HEK293 (cell line): ENCODE measurements at regions of chr2 and their contacts with region 1.

Region 1: DNA sequence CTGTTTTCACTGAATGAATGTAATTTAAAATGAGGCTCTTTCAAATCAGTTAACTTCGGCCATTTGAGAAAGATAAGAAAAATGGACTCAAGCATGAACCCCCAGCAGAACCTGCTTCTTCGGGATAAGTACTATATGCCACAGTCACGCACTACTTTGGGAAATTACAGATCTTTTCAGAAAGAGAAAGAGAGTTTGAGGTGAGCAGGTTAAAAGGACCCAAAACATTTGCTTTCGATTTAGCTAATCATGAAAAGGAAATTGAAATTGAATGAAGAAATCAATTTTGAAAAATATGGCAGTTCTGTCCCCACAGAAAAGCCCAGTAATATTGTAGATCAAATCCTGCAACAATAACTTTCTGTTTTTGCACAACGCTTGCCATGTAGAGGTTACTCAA is 156.9 kb downstream of the GRB14 start:
- H3K4me3 ChIP-seq: no peak overlapping the region
- H3K27ac ChIP-seq: no peak overlapping the region
- H3K4me1 ChIP-seq: no peaks in the 10 kb centered on the region
- CTCF ChIP-seq: no peak

Region 2: DNA sequence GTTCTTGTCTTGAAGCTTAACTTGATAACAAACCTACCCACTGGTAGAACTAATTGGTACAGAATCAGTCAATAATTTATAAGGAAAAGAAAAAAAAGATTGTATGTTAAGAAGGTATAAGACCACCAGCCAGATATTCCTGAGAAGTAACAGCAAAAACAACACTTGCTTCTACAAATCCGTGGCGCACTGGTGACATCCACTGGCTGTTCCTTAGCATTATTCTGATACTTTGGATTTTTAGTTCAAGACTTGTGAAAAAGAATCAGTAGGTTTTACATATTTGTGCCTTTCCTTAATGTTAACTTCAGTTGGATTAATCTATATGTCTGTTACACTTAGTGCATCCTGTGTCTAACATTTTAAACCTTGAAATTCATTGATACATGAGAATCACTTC is 15.1 kb after region 1 on chr2:
- CTCF ChIA-PET with region 1: interaction called, 19 read pairs
- POLR2A ChIA-PET with region 1: no interaction called
- H3K4me3 ChIP-seq: no peak overlapping the region
- H3K27ac ChIP-seq: no peak overlapping the region
- H3K4me1 ChIP-seq: no peaks in the 10 kb centered on the region
- CTCF ChIP-seq: peak; percentile 48; the same call in 1 of the 2 replicates

Region 3: GRCh38 chr2:164504258-164504657 is 39.9 kb after region 1 on chr2:
- CTCF ChIA-PET with region 1: no interaction called
- POLR2A ChIA-PET with region 1: no interaction called
- H3K4me3 ChIP-seq: no peak overlapping the region
- H3K27ac ChIP-seq: no peak overlapping the region
- H3K4me1 ChIP-seq: no peaks in the 10 kb centered on the region
- CTCF ChIP-seq: no peak

Region 4: GRCh38 chr2:164538240-164538866 is 74.0 kb after region 1 on chr2:
- CTCF ChIA-PET with region 1: no interaction called
- POLR2A ChIA-PET with region 1: no interaction called
- H3K4me3 ChIP-seq: no peak overlapping the region
- H3K27ac ChIP-seq: no peak overlapping the region
- H3K4me1 ChIP-seq: peaks cover 8% of the 10 kb centered on the region; the same call in 1 of the 2 replicates
- CTCF ChIP-seq: peak; percentile 37; the same call in 1 of the 2 replicates